ENCODE measurements at regions of chr2 and their contacts with region 1.

Region 1: DNA sequence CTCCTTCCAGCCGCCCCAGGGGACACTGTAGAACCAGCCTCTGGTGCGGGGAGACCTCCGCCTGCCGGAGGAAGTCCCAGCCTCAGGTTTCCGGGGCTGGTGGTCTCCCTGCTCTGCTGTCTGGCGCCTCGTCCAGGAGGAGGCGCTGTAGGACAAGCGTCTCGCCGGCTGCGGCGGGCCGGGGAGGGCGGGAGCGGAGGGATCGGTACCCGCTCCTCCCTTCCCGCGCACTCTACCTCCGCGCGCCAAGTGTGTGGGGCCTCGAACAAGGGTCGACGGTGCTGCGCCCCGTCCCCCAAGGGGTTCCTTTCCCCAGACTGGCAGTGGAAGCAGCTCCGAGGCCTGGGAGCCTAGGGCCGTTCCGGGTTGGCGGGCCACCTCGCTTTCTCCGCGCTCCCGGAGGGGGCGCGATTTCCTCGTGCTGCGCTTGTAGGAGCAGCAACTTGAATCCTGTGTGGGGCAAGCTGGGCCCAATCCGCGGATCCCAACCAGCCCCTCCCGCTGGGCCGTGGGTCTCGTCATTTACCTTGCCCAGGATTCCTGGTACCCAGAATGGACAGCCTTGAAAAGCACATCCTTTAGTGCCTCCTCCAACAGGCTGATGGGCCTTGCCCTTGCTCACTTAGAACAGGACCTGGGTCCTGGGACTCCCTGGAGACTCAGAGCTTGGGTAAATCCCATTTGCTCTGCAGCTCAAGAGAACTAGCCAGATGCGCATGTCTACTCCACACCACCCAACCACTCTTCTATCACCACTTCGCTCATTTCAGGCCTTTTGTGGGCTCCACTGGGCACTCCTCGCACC is 10.6 kb upstream of the HOXD4 start:
- DNase-seq: peak; percentile 42 to 89 (median 68)
- ATAC-seq: peak; percentile 84 to 97 (median 96)
- H3K4me3 ChIP-seq: peak overlapping the region in 2 of 4 donors; percentile 33 to 46
- H3K27ac ChIP-seq: no peak overlapping the region
- H3K4me1 ChIP-seq: peaks cover 0 to 6% (median 0%) of the 10 kb centered on the region in 3 donors
- H3K27me3 ChIP-seq: peaks cover 0 to 61% (median 12%) of the 10 kb centered on the region in 4 donors
- CTCF ChIP-seq: peak; percentile 68 to 86 (median 76)

Region 2: DNA sequence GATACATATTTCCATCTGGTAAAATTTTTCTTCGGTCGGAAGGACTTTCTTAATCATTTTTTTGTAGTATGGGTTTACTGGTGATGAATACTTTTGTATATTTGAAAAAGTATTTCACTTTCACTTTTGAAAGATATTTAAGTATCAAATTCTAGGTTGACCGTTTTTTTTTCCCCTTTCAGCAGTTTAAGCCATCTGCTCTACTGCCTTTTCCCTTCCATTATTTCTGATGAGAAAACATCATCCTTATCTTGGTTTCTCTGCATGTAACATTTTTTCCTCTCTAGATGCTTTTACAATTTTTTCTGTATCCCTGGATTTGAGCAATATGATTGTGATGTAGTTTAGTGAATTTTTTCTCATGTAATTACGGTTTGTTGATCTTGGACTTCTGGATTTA is 215.5 kb after region 1 on chr2:
- intact Hi-C with region 1: no loop called
- DNase-seq: no peak
- ATAC-seq: no peak
- H3K4me3 ChIP-seq: no peak overlapping the region
- H3K27ac ChIP-seq: no peak overlapping the region
- H3K4me1 ChIP-seq: no peaks in the 10 kb centered on the region
- H3K27me3 ChIP-seq: no peaks in the 10 kb centered on the region
- CTCF ChIP-seq: no peak

Region 3: GRCh38 chr2:176454893-176455811 is 314.4 kb after region 1 on chr2:
- intact Hi-C with region 1: loop called (anchors 5 to 10 kb)
- DNase-seq: peak; percentile 52 to 97 (median 80)
- ATAC-seq: peak; percentile 24 to 94 (median 86)
- H3K4me3 ChIP-seq: no peak overlapping the region
- H3K27ac ChIP-seq: no peak overlapping the region
- H3K4me1 ChIP-seq: no peaks in the 10 kb centered on the region
- H3K27me3 ChIP-seq: peaks cover 0 to 7% (median 2%) of the 10 kb centered on the region in 4 donors
- CTCF ChIP-seq: peak; percentile 85 to 97 (median 90)

Region 4: DNA sequence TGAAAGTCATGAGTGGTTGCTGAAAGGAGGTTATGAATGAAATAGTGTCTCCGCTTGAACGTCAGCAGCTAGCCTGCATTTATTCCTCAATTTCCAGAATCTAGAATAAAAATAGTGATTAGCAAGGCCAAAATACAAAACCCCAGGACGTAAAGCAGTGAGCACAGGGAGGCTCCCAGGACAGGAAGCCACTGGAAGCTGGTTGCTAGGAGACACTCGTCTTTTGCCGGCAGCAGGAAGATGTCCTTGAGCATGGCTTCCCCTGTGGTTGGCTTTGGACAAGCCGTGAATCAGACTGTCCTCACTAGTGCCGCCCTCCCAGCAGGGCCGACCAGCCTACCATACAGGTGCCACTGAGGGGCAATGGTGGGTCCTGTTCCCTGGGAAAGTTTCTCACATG is 502.9 kb after region 1 on chr2:
- intact Hi-C with region 1: loop called in 2 of 3 experiments (anchors 5 to 10 kb)
- DNase-seq: no peak
- ATAC-seq: no peak
- H3K4me3 ChIP-seq: no peak overlapping the region
- H3K27ac ChIP-seq: no peak overlapping the region
- H3K4me1 ChIP-seq: no peaks in the 10 kb centered on the region
- H3K27me3 ChIP-seq: peaks cover 0 to 30% (median 4%) of the 10 kb centered on the region in 4 donors
- CTCF ChIP-seq: no peak

Region 5: DNA sequence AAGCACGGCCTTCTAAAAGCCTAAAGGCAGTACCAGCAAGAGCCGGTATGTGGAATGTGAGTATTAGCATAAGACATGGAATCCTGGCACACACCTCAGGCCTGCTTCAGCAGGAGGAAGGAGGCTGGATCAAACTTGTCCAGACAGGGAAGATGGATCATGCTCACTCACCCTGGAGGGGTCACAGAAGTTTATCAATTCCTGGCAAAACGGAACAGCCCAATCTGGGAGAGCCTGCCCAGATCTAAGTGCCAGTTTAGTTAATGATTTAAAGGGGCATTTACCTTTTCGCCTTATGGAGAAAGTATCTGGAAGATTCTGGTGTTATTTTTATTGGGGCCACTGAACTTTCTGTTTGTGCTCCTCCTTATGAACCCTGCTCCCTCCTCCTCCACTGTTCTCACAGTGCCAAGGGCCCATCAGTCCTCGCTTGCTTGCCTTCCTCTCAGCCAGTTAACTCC is 1182.1 kb after region 1 on chr2:
- intact Hi-C with region 1: no loop called
- DNase-seq: peak in 4 of 6 donors; percentile 16 to 41 (median 16)
- ATAC-seq: peak; percentile 79 to 89 (median 84)
- H3K4me3 ChIP-seq: no peak overlapping the region
- H3K27ac ChIP-seq: no peak overlapping the region
- H3K4me1 ChIP-seq: peaks cover 0 to 12% (median under 1%) of the 10 kb centered on the region in 3 donors
- H3K27me3 ChIP-seq: no peaks in the 10 kb centered on the region
- CTCF ChIP-seq: no peak